HEK293T (cell line): ENCODE measurements at regions of chr19 and their contacts with region 1.

Region 1: GRCh38 chr19:12938234-12939025 is at the start of gene CALR:
- DNase-seq: peak; percentile 96

Region 2: DNA sequence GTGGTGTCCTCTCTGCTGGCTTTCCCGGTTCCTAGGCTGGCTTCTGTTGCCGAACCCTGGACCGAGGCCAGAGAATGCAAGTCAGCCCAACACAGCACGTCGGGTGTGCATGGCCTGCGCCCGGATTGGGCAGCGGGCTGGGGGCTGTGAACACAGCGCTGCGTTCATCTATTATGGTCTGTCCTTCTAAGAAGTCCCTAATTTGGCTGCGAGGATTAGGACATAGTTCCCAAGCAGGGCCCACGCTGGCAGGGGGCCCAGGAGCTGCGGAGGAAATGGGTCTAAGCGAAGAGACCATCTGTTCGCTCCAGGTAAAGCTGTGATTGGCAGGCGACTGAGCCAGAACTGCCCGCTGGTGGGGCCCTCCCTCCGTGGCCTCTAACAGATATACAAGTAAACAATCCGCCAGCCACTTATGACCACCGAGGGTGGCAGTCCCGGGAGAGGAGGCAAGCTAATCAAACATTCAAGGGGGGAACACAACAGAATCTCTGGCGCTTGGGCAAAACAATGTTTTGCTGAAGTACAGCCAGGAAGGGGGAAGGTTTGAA is 25.3 kb before region 1 on chr19:
- CTCF ChIA-PET with region 1: no interaction called
- POLR2A ChIA-PET with region 1: interaction called, 12 read pairs
- DNase-seq: peak; percentile 45

Region 3: DNA sequence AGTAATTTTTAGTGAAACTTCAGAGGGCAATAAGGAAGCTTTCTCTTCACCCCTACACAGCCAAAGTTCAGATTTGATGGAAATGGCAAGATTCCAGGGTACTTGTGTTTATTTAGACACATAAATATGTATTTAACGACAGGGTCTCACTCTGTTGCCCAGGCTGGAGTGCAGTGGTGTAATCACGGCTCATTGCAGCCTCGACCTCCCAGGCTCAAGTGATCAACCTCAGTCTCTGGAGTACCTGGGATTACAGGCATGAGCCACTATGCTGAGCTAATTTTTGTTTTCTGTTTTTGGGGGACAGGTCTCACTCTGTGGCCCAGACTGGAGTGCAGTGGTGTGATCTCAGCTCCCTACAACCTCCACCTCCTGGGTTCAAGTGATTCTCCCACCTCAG is 17.4 kb before region 1 on chr19:
- CTCF ChIA-PET with region 1: no interaction called
- POLR2A ChIA-PET with region 1: interaction called, 11 read pairs
- DNase-seq: no peak

Region 4: GRCh38 chr19:12956446-12957388 is 18.3 kb after region 1 on chr19 and contains the start of gene GADD45GIP1:
- CTCF ChIA-PET with region 1: no interaction called
- POLR2A ChIA-PET with region 1: interaction called, 11 read pairs
- DNase-seq: peak; percentile 86

Region 5: DNA sequence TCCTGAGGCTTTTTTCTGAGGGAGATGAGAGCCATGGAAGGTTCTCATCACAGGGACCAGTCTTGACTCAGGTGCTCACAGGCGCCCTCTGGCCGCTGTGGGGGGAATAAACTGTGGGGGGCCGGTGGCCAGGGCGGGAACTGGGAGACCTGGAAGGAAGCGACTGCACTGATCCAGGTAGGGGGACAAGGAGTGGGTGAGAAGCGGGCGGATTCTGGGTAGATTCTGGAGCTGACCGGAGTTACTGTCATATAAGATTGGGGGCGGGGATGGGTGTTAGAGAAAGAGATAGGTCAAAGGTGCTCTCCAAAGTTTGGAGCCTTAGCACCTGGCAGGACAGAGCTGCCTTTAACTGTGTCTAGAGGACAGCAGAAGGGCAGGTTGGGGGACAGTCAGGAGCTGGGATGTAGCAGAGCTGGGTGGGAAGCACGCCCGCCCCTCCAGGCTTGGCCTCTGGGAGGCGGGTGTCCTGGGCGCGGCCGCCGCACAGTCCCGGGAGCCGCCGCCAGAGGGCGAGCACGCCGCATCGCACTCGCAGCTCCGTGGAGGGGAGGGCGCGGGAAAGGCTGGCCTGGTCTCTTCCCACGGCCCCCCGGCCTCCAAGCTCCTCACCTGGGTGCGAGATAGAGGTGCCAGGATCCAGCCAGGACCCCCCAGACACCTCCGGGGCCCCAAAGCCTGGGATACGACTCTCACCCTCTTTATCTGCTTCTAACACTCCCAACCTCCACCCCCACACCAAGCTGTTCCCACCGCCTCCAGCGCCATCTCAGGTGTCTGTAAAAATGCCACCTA is 26.8 kb after region 1 on chr19:
- CTCF ChIA-PET with region 1: interaction called, 8 read pairs
- POLR2A ChIA-PET with region 1: interaction called, 12 read pairs
- DNase-seq: peak; percentile 87

Region 6: GRCh38 chr19:12983542-12984142 is 45.2 kb after region 1 on chr19:
- CTCF ChIA-PET with region 1: no interaction called
- POLR2A ChIA-PET with region 1: no interaction called
- DNase-seq: peak; percentile 90